PC-9 (cell line): ENCODE measurements at regions of chr9 and their contacts with region 1.

Region 1: DNA sequence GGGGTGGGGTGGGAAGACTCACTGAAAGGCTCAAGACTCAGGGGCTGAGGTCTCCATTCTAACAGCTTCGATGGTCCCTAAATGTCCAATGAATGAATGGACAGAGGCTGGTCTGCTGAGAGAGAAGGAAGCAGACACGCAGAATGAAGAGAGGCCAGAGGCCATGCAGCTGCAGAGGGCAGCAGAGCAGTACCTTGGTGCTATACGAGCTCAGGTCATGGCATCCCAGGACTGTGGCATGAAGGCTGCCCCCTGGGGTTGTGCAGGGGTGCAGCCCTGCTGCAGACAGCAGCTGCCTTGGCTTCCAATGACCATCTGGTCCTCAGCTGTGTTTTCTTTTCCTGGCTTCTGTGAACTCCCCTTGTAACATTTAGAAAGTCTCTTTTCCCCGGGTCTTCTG is 15.2 kb upstream of the CORO2A start:
- DNase-seq: no peak
- H3K4me3 ChIP-seq: no peak overlapping the region
- H3K27ac ChIP-seq: no peak overlapping the region
- H3K4me1 ChIP-seq: no peaks in the 10 kb centered on the region; the same call in 1 of the 2 replicates
- H3K27me3 ChIP-seq: no peaks in the 10 kb centered on the region
- CTCF ChIP-seq: no peak

Region 2: GRCh38 chr9:98037357-98037756 is 170.2 kb before region 1 on chr9:
- CTCF ChIA-PET with region 1: no interaction called
- POLR2A ChIA-PET with region 1: no interaction called
- intact Hi-C with region 1: no loop called
- DNase-seq: peak; percentile 47 to 51
- H3K4me3 ChIP-seq: no peak overlapping the region
- H3K27ac ChIP-seq: 0 out of 2 replicates have a peak overlapping the region, but pooled peaks have one; percentile 11
- H3K4me1 ChIP-seq: peaks cover 29% of the 10 kb centered on the region
- H3K27me3 ChIP-seq: no peaks in the 10 kb centered on the region
- CTCF ChIP-seq: no peak

Region 3: DNA sequence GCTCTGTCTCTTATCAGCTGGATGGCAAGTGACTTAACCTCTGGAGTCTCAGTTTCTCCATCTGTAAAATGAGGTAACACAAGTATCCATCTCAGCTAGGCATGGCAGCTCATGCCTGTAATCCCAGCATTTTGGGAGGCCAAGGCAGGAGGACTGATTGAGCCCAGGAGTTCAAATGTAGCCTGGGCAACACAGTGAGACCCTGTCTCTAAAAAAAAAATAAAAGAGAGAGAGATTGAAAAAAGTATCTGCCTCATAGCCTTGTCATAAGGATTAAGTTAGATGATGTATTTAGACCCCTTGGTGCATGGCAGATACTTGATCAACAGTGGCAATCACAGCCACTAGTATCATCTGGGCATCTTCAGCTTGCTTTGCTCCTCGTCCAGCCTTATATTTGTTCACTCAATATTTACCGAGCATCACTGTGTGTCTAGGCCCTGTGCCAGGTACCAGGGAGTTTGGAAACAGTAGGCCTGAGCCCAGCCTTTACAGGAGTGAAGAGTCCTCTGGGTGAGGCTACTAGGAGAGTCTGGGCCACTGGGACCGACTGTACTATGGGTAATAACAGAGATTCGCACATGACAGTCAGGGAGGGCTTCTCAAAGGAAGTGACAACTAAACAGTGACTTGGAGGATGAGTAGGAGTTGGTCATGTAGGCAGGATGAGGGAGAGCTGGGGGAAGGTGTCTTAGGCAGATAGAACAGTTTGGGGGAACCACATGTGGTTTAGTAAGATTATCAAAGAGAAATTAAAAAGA is 49.4 kb before region 1 on chr9:
- CTCF ChIA-PET with region 1: no interaction called
- POLR2A ChIA-PET with region 1: no interaction called
- intact Hi-C with region 1: no loop called
- DNase-seq: peak in 1 of 2 experiments; percentile 37
- H3K4me3 ChIP-seq: no peak overlapping the region
- H3K27ac ChIP-seq: no peak overlapping the region
- H3K4me1 ChIP-seq: peaks cover 24% of the 10 kb centered on the region
- H3K27me3 ChIP-seq: no peaks in the 10 kb centered on the region
- CTCF ChIP-seq: no peak

Region 4: DNA sequence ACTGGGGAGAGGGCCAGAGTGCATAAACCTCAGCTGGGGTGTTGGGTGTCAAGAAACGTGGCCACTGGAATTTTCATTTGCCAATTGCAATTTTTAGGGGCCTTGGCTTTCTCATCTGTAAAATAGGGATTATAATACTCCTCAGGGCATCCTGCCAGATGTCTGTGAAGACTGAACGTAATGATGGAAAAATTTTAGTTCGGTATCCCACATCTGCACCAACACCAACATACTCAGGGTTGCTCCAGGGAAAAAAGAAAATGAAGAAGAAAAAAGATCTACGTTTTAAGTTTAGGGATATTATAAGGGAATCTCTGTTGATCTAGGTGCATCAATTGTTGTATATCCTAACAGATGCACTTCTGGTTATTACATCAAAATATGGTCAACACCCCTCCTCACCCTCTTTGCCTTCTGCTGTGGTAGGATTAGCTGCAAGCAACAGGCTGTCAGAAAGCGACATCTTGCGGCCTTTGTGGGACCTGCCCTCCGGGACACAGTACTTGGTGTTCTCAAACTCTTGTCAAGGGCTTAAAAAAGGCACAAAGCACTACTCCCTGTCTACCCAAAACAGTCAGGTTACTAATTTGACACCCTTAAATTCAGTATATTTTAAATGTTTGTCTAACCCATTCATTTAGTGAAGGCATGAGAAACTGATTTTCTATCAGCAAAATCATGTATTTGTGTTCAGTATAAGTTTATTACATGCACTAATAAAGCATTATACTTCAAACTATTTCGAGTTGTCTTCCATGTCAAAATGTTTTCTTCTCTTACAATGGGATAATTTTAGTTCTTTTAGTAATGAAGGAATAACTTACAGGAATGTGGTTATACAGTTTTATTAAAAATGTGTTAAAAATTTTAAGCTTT is 56.1 kb after region 1 on chr9:
- CTCF ChIA-PET with region 1: interaction called, 8 read pairs
- POLR2A ChIA-PET with region 1: no interaction called
- intact Hi-C with region 1: loop called (anchors 1 kb)
- DNase-seq: peak; percentile 59 to 81
- H3K4me3 ChIP-seq: no peak overlapping the region
- H3K27ac ChIP-seq: no peak overlapping the region
- H3K4me1 ChIP-seq: no peaks in the 10 kb centered on the region
- H3K27me3 ChIP-seq: no peaks in the 10 kb centered on the region
- CTCF ChIP-seq: peak; percentile 89

Region 5: DNA sequence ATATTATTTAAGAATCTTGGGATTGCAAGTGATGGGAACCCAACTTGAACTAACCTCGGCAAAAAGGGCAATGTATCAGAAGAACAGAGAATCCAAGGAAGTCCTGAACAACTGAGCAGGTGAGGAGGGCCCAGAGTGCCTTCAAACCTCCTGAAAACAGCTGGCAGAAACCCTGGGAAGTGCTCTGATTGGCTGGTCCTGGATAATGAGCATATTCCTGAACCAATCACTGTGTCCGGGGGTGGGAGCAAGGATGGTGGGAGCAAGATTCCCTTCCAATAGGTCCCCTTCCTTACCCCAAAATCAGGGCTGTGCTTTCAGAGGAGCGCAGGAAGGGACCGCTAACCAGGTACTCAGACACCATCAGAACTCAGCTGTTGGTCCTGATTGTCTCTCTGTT is 79.8 kb after region 1 on chr9:
- CTCF ChIA-PET with region 1: no interaction called
- POLR2A ChIA-PET with region 1: interaction called, 21 read pairs
- intact Hi-C with region 1: no loop called
- DNase-seq: peak in 1 of 2 experiments; percentile 8
- H3K4me3 ChIP-seq: no peak overlapping the region
- H3K27ac ChIP-seq: no peak overlapping the region
- H3K4me1 ChIP-seq: peaks cover 17% of the 10 kb centered on the region; the same call in 1 of the 2 replicates
- H3K27me3 ChIP-seq: no peaks in the 10 kb centered on the region
- CTCF ChIP-seq: no peak

Region 6: GRCh38 chr9:98796364-98797101 is 588.9 kb after region 1 on chr9 and contains the start of gene ANKS6:
- CTCF ChIA-PET with region 1: no interaction called
- POLR2A ChIA-PET with region 1: no interaction called
- intact Hi-C with region 1: loop called (anchors 10 kb)
- DNase-seq: peak in 1 of 2 experiments; percentile 87
- H3K4me3 ChIP-seq: peak within 1 kb of the TSS; percentile 64
- H3K27ac ChIP-seq: no peak within 1 kb of the TSS
- H3K4me1 ChIP-seq: peaks cover 44% of the 10 kb centered on the region
- H3K27me3 ChIP-seq: no peaks in the 10 kb centered on the region
- CTCF ChIP-seq: peak; percentile 49; the same call in 1 of the 2 replicates
- total RNA-seq, gene ANKS6: 74.7 and 87.7 TPM in 2 replicates